CD4-positive, alpha-beta T cell (primary cell): ENCODE measurements at regions of chr20 and their contacts with region 1.

Region 1: DNA sequence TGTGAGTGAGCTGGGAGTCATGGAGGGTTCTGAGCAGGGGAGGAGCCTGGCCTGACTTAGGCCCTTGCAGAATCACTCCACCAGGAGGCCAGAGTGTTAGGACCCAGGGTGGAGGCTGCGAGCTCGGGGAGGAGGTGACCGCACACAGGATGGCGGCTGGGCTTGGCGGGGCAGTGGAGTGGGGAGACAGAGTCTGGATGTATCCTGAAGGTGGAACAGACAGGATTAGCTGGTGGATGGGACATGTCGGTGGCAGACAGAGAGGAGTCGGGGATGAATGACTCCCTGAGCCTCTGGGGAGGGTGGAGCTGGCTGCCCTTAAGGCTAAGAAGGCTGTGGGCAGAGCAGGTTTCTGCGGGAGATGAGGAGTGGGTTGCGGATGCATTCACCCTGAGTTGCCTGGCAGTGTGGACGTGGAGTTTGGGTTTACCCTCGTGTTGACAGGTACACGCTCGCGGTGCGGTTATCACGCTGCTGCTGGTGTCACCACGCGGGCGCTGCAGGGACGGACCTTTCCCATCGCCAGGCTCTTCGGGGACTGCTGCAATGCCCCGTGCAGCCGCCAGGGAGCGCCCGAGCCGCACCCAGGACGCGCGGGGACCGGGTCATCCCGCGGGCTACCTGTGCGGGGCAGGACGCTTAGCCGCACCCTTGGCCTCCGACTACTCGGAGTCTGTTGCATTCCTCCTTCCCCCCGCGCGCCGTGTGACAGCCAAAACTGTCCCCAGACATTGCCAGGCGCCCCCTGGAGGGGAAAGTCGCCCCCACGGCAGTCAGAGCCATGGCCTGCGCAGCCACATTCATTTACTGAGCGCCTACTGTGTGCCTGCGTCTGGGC is 43.0 kb upstream of the PTGIS start:
- DNase-seq: peak; percentile 52 to 84 (median 66)
- ATAC-seq: peak; percentile 68
- H3K4me3 ChIP-seq: no peak overlapping the region
- H3K4me3 Mint-ChIP-seq: no peak overlapping the region
- H3K27ac ChIP-seq: no peak overlapping the region
- H3K27ac Mint-ChIP-seq: no peak overlapping the region
- H3K4me1 ChIP-seq: peaks cover 20% of the 10 kb centered on the region
- H3K4me1 Mint-ChIP-seq: peaks cover 17% of the 10 kb centered on the region
- H3K27me3 ChIP-seq: peaks cover 3 to 14% of the 10 kb centered on the region in 2 experiments
- H3K27me3 Mint-ChIP-seq: peaks cover 16% of the 10 kb centered on the region
- CTCF ChIP-seq: peak; percentile 100

Region 2: DNA sequence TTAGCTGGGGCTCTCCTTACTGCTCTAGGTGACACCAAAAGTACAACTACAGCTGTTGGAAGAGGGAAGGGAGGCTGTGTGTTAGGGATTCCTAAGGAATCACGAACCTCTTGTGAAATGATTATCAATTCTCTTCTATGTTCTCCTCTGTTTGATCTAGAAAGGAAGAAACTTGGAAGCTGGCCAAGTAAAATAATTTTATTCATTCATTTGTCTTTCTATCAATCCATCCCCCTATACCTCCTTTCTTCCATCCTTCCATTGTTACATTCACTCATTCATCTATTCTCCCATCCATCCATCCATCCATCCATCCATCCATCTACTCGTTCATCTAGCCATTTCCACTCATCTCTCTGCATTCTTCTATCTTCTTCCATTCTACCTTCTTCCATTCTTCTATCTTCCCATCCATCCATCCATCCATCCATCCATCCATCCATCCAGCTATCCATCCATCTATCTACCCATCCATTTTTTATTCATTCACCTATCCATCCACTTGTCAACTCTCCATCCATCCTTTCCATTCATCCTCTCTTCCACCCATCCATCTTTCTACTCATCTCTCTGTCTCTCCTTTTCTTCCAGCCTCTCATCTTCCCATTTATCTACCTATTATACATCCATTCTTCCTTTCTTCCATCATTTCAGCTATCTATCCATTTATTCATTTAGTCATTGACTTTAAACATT is 280.2 kb before region 1 on chr20:
- CTCF ChIA-PET with region 1: no interaction called
- POLR2A ChIA-PET with region 1: no interaction called
- intact Hi-C with region 1: loop called (anchors 5 kb)
- DNase-seq: no peak
- ATAC-seq: no peak
- H3K4me3 ChIP-seq: no peak overlapping the region
- H3K4me3 Mint-ChIP-seq: no peak overlapping the region
- H3K27ac ChIP-seq: no peak overlapping the region
- H3K27ac Mint-ChIP-seq: no peak overlapping the region
- H3K4me1 ChIP-seq: no peaks in the 10 kb centered on the region
- H3K4me1 Mint-ChIP-seq: no peaks in the 10 kb centered on the region
- H3K27me3 ChIP-seq: peaks cover 0 to 4% of the 10 kb centered on the region in 2 experiments
- H3K27me3 Mint-ChIP-seq: peaks cover 29% of the 10 kb centered on the region
- CTCF ChIP-seq: no peak

Region 3: DNA sequence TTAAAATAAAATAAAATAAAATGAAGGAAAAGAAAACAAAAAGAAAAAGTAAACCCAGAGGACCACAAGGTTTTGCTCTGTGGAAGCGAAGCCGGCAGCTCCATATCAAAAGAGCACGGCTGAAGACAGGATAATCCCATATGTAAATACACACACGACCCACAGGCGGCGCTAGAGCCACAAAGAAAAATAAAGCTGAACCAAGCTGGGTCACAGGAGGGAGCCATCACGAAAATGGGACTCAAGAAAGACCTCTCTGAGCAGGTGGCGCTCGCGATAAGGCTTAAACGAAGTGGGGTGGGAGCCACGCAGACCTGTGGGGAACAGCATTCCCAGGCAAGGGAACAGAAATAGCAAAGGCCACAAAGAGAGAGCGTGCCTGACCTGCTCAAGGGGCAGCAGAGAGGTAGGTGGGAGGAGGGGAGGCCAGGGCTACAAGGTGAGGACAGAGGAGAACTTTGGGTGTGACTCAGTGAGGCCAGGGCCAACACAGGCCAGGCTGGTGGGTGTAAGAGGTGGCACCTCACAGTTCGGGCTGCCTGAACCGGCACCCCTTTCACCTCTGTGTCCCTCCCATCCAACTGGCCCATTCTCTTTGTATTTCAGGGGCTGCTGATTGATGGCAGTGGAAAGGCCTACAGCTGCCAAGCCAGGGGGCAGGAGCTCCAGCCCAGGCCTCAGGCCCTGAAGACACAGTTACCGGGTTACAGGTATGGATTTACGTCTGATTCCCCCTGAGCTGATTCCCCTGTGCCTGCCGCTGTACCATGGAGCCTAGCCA is 69.0 kb before region 1 on chr20:
- CTCF ChIA-PET with region 1: interaction called, 14 read pairs
- POLR2A ChIA-PET with region 1: no interaction called
- intact Hi-C with region 1: loop called in 1 of 2 experiments (anchors 2 kb)
- DNase-seq: peak; percentile 11 to 78 (median 36)
- ATAC-seq: peak; percentile 51
- H3K4me3 ChIP-seq: no peak overlapping the region
- H3K4me3 Mint-ChIP-seq: no peak overlapping the region
- H3K27ac ChIP-seq: no peak overlapping the region
- H3K27ac Mint-ChIP-seq: no peak overlapping the region
- H3K4me1 ChIP-seq: peaks cover 2% of the 10 kb centered on the region
- H3K4me1 Mint-ChIP-seq: no peaks in the 10 kb centered on the region
- H3K27me3 ChIP-seq: peaks cover 0 to 9% of the 10 kb centered on the region in 2 experiments
- H3K27me3 Mint-ChIP-seq: peaks cover 14% of the 10 kb centered on the region
- CTCF ChIP-seq: peak; percentile 38

Region 4: GRCh38 chr20:49724408-49725223 is 113.7 kb after region 1 on chr20:
- CTCF ChIA-PET with region 1: no interaction called
- POLR2A ChIA-PET with region 1: no interaction called
- intact Hi-C with region 1: loop called in 1 of 2 experiments (anchors 10 kb)
- DNase-seq: peak in 6 of 14 experiments; percentile 5 to 57 (median 33)
- ATAC-seq: peak; percentile 48
- H3K4me3 ChIP-seq: no peak overlapping the region
- H3K4me3 Mint-ChIP-seq: no peak overlapping the region
- H3K27ac ChIP-seq: no peak overlapping the region
- H3K27ac Mint-ChIP-seq: no peak overlapping the region
- H3K4me1 ChIP-seq: peaks cover 12% of the 10 kb centered on the region
- H3K4me1 Mint-ChIP-seq: peaks cover 9% of the 10 kb centered on the region
- H3K27me3 ChIP-seq: peaks cover 0 to 2% of the 10 kb centered on the region in 2 experiments
- H3K27me3 Mint-ChIP-seq: peaks cover 2% of the 10 kb centered on the region
- CTCF ChIP-seq: no peak

Region 5: GRCh38 chr20:49846206-49846807 is 235.4 kb after region 1 on chr20:
- CTCF ChIA-PET with region 1: interaction called, 8 read pairs
- POLR2A ChIA-PET with region 1: no interaction called
- intact Hi-C with region 1: loop called (anchors 1 kb)
- DNase-seq: peak in 13 of 14 experiments; percentile 10 to 79 (median 34)
- ATAC-seq: peak; percentile 77
- H3K4me3 ChIP-seq: no peak overlapping the region
- H3K4me3 Mint-ChIP-seq: no peak overlapping the region
- H3K27ac ChIP-seq: no peak overlapping the region
- H3K27ac Mint-ChIP-seq: no peak overlapping the region
- H3K4me1 ChIP-seq: peaks cover 3% of the 10 kb centered on the region
- H3K4me1 Mint-ChIP-seq: peaks cover 9% of the 10 kb centered on the region
- H3K27me3 ChIP-seq: no peaks in the 10 kb centered on the region
- H3K27me3 Mint-ChIP-seq: no peaks in the 10 kb centered on the region
- CTCF ChIP-seq: peak; percentile 70

Region 6: GRCh38 chr20:49888345-49888966 is 277.5 kb after region 1 on chr20:
- CTCF ChIA-PET with region 1: interaction called, 3 read pairs
- POLR2A ChIA-PET with region 1: no interaction called
- intact Hi-C with region 1: loop called in 1 of 2 experiments (anchors 1 kb)
- DNase-seq: peak in 13 of 14 experiments; percentile 19 to 73 (median 44)
- ATAC-seq: peak; percentile 69
- H3K4me3 ChIP-seq: no peak overlapping the region
- H3K4me3 Mint-ChIP-seq: no peak overlapping the region
- H3K27ac ChIP-seq: no peak overlapping the region
- H3K27ac Mint-ChIP-seq: peak overlapping the region; percentile 18
- H3K4me1 ChIP-seq: peaks cover 9% of the 10 kb centered on the region
- H3K4me1 Mint-ChIP-seq: peaks cover 4% of the 10 kb centered on the region
- H3K27me3 ChIP-seq: no peaks in the 10 kb centered on the region
- H3K27me3 Mint-ChIP-seq: no peaks in the 10 kb centered on the region
- CTCF ChIP-seq: peak; percentile 67

Region 7: DNA sequence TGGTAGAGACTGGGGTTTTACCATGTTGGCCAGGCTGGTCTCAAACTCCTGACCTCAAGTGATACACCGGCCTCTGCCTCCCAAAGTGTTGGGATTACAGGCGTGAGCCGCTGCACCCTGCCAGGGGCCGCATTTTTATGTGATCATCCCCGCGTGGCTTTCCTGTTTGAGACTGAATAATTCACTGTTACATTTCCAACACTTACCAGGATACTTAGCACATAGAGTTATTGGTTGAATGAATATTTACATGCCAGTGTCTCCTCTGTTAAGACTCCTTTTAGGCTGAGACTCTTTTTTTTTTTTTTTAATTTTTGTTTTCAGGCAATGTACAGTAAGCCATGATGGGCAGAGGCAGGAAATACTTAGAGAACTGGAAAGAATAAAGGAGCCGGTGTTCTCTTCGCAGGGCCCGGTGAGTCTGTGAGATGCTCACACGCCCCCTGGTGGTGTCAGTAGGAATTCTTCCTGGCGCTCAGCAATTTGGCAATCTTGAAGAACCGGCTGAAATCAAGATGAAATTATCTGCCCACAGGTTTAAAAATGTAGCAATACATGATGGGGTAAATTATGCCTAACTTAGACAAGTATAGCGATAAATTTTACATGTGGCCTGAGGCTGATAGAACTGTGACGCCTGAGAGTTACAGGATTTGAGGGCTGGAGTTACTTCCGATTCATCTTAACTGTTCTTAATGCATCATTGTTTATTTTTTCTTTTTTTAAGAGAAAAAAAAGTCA is 317.7 kb after region 1 on chr20:
- CTCF ChIA-PET with region 1: no interaction called
- POLR2A ChIA-PET with region 1: no interaction called
- intact Hi-C with region 1: loop called in 1 of 2 experiments (anchors 1 kb)
- DNase-seq: peak; percentile 66 to 90 (median 77)
- ATAC-seq: peak; percentile 99
- H3K4me3 ChIP-seq: no peak overlapping the region
- H3K4me3 Mint-ChIP-seq: peak overlapping the region; percentile 59
- H3K27ac ChIP-seq: no peak overlapping the region
- H3K27ac Mint-ChIP-seq: peak overlapping the region; percentile 58
- H3K4me1 ChIP-seq: peaks cover 7% of the 10 kb centered on the region
- H3K4me1 Mint-ChIP-seq: peaks cover 8% of the 10 kb centered on the region
- H3K27me3 ChIP-seq: no peaks in the 10 kb centered on the region
- H3K27me3 Mint-ChIP-seq: peaks cover 4% of the 10 kb centered on the region
- CTCF ChIP-seq: peak; percentile 97